Right ventricle myocardium inferior (tissue), 1 donor: ENCODE measurements at regions of chr5 and their contacts with region 1.

Region 1: GRCh38 chr5:115831163-115831768 is 10.1 kb downstream of the ATG12 start:
- DNase-seq: no peak
- ATAC-seq: peak; percentile 23

Region 2: GRCh38 chr5:115625579-115626444 is 205.5 kb before region 1 on chr5 and contains the start of gene TMED7:
- intact Hi-C with region 1: loop called (anchors 2 kb)
- DNase-seq: peak; percentile 100
- ATAC-seq: peak; percentile 99
- total RNA-seq, gene TMED7: 66.6 TPM

Region 3: GRCh38 chr5:115946655-115947054 is 115.4 kb after region 1 on chr5:
- intact Hi-C with region 1: no loop called
- DNase-seq: no peak
- ATAC-seq: no peak

Region 4: GRCh38 chr5:116068028-116068632 is 236.9 kb after region 1 on chr5:
- intact Hi-C with region 1: no loop called
- DNase-seq: no peak
- ATAC-seq: no peak